SK-N-SH (cell line): ENCODE measurements at regions of chr17 and their contacts with region 1.

Region 1: DNA sequence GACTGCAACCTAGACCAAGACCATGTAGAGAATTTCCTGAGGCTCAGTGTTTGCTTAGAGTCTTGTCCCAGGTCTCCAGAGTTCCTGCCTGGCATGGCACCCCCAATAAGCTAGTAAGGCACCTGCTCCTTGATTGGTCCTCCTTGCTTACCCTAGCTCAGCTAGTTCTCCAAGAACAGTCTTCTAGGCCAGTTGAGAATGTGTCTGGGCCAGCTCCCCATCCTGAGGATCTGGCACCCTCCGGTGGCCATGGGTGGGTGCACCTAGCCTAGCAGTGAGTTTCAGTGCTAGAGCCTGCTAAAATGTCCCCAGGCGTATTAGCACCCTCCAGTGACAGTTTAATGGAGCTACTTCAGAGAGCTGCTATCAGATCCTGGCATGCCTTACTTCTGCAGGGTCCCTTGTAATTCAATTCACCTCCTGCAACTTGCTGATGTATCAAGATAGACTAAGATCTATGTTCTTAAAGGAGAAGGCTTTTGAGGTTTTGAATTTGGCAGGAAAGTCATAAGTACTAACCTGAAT is 44.4 kb upstream of the MED13 start:
- DNase-seq: peak; percentile 79
- H3K4me3 ChIP-seq: no peak overlapping the region; a peak in 1 of 4 replicates
- H3K27ac ChIP-seq: no peak overlapping the region
- H3K4me1 ChIP-seq: peaks cover 0 to 7% of the 10 kb centered on the region in 2 experiments; a peak in 1 of 4 replicates
- H3K27me3 ChIP-seq: 0 out of 2 replicates have a peak, but pooled peaks cover 9% of the 10 kb centered on the region
- CTCF ChIP-seq: peak; percentile 75
- EP300 ChIP-seq: peak in 1 of 2 experiments; percentile 79; a peak in 2 of 4 replicates
- RAD21 ChIP-seq: peak; percentile 97

Region 2: GRCh38 chr17:61897303-61898200 is 211.9 kb before region 1 on chr17:
- CTCF ChIA-PET with region 1: interaction called, 10 read pairs
- POLR2A ChIA-PET with region 1: no interaction called
- DNase-seq: no peak
- H3K4me3 ChIP-seq: no peak overlapping the region
- H3K27ac ChIP-seq: no peak overlapping the region
- H3K4me1 ChIP-seq: no peaks in the 10 kb centered on the region
- H3K27me3 ChIP-seq: no peaks in the 10 kb centered on the region
- CTCF ChIP-seq: no peak
- EP300 ChIP-seq: no peak
- RAD21 ChIP-seq: no peak

Region 3: GRCh38 chr17:62065598-62066468 is 43.6 kb before region 1 on chr17:
- CTCF ChIA-PET with region 1: interaction called, 11 read pairs
- POLR2A ChIA-PET with region 1: interaction called, 5 read pairs
- DNase-seq: peak; percentile 100
- H3K4me3 ChIP-seq: peak overlapping the region; percentile 90 to 95
- H3K27ac ChIP-seq: peak overlapping the region; percentile 96 to 99
- H3K4me1 ChIP-seq: peaks cover 18 to 20% of the 10 kb centered on the region in 2 experiments; a peak in 3 of 4 replicates
- H3K27me3 ChIP-seq: no peaks in the 10 kb centered on the region
- CTCF ChIP-seq: peak; percentile 99
- EP300 ChIP-seq: no peak
- RAD21 ChIP-seq: peak; percentile 86

Region 4: GRCh38 chr17:62093188-62094155 is 16.0 kb before region 1 on chr17:
- CTCF ChIA-PET with region 1: interaction called, 44 read pairs
- POLR2A ChIA-PET with region 1: interaction called, 7 read pairs
- DNase-seq: peak; percentile 59
- H3K4me3 ChIP-seq: 0 out of 4 replicates have a peak overlapping the region, but pooled peaks of 1 of the 2 experiments have one; percentile 0
- H3K27ac ChIP-seq: peak overlapping the region in 1 of 2 experiments; percentile 76; a peak in 3 of 4 replicates
- H3K4me1 ChIP-seq: peaks cover 8 to 11% of the 10 kb centered on the region in 2 experiments; a peak in 3 of 4 replicates
- H3K27me3 ChIP-seq: no peaks in the 10 kb centered on the region
- CTCF ChIP-seq: no peak
- EP300 ChIP-seq: peak; percentile 14 to 21; a peak in 2 of 4 replicates
- RAD21 ChIP-seq: no peak